HepG2 (cell line): ENCODE measurements at regions of chr6 and their contacts with region 1.

Region 1: GRCh38 chr6:43013843-43014433 is at the starts of genes KLHDC3 and MEA1:
- DNase-seq: peak; percentile 100
- ATAC-seq: peak; percentile 94
- H3K4me3 ChIP-seq: peak within 1 kb of the TSS; percentile 88 to 93 (median 91)
- H3K27ac ChIP-seq: peak within 1 kb of the TSS; percentile 44
- H3K4me1 ChIP-seq: peaks cover 38% of the 10 kb centered on the region
- H3K27me3 ChIP-seq: no peaks in the 10 kb centered on the region; a peak in 1 of 5 replicates
- CTCF ChIP-seq: no peak
- EP300 ChIP-seq: no peak; a peak in 1 of 4 replicates
- POLR2A ChIP-seq: peak in 1 of 2 experiments; percentile 68; a peak in 2 of 4 replicates
- RAD21 ChIP-seq: no peak
- total RNA-seq, gene KLHDC3: 91.5 and 92.5 TPM in 2 replicates
- total RNA-seq, gene MEA1: 86.2 and 110 TPM in 2 replicates

Region 2: DNA sequence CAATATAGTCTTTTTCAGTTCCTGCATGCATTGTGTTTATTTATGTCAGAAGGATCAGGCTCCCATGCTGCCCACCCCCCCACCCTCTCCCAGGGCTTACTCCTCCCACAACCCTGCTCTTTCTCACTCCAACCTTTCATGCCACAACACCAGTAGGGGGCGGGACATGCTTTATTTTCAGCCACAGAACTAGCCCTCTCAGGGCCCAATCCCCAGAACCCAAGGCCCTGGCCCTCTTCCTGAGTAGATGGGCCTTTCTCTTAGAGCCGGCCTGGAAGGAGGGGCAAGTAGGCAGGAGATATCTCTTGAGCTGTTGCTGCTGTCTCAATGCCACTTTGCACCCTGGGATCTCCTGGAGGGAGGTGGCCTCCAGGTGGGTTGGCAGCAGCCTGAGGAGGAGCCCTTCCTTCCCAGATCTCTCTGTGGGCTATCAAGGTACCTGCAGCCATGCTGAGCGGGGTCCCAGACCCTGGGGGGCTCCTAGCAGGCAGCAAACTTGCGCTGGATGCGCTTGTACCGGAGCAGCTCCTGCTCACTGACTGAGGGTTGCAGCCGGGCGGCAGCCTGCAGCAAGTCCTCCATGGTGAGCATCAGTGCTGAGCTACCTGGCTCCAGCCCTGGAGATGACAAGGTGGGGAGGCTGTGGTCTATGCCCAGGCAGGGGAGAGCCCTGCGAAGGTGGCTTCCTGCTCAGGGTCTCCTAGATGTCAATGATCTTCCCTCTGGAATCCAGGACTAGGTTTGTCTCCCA is 49.9 kb before region 1 on chr6:
- CTCF ChIA-PET with region 1: no interaction called
- POLR2A ChIA-PET with region 1: interaction called, 5 read pairs
- in situ Hi-C with region 1: no loop called
- intact Hi-C with region 1: loop called (anchors 5 kb)
- DNase-seq: peak; percentile 76
- ATAC-seq: peak; percentile 44
- H3K4me3 ChIP-seq: no peak overlapping the region
- H3K27ac ChIP-seq: no peak overlapping the region
- H3K4me1 ChIP-seq: peaks cover 35% of the 10 kb centered on the region
- H3K27me3 ChIP-seq: no peaks in the 10 kb centered on the region; a peak in 1 of 5 replicates
- CTCF ChIP-seq: peak; percentile 72
- EP300 ChIP-seq: no peak
- POLR2A ChIP-seq: no peak
- RAD21 ChIP-seq: peak; percentile 62

Region 3: GRCh38 chr6:43035495-43036194 is 21.7 kb after region 1 on chr6:
- CTCF ChIA-PET with region 1: no interaction called
- POLR2A ChIA-PET with region 1: interaction called, 31 read pairs
- in situ Hi-C with region 1: no loop called
- intact Hi-C with region 1: loop called (anchors 1 kb)
- DNase-seq: no peak
- ATAC-seq: peak; percentile 86
- H3K4me3 ChIP-seq: peak overlapping the region in 1 of 3 experiments; percentile 3; a peak in 1 of 6 replicates
- H3K27ac ChIP-seq: peak overlapping the region; percentile 39
- H3K4me1 ChIP-seq: peaks cover 12% of the 10 kb centered on the region
- H3K27me3 ChIP-seq: no peaks in the 10 kb centered on the region
- CTCF ChIP-seq: no peak
- EP300 ChIP-seq: no peak
- POLR2A ChIP-seq: peak in 1 of 2 experiments; percentile 16; a peak in 1 of 4 replicates
- RAD21 ChIP-seq: no peak

Region 4: DNA sequence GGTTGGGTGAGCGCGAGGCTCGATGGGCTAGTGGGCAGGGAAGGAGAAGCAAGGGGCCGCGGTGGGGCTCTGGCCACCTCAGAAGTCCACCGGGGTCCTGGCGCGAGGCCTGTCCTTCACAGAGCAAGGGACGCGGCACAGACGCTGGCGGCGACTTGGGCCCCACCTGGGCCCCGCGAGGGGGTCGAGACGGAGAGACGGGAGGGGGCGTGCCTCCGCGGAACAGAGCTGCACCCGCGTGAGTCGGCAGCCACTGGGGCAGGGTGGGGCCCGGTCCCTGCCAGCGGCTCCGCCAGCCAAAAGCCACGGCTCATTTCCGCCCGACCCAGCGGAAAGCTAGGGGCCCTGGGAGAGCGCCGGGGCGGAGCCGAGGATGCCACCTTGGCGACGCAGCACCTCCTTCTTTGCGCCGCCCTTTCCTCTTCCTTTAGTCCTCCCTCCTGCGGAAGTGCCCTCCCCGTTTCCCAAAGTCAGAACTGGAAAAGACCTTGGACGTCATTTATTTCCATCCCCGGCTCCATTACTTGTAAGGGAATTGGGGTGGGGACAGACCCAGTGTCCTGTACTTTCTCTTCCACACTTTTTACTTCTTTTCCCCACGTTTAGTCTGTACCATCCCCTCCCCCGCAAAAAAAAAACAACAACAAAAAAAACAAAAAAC is 39.7 kb after region 1 on chr6 and contains the start of gene CUL7:
- CTCF ChIA-PET with region 1: no interaction called
- POLR2A ChIA-PET with region 1: interaction called, 45 read pairs
- in situ Hi-C with region 1: no loop called
- intact Hi-C with region 1: loop called (anchors 5 kb)
- DNase-seq: peak; percentile 91
- ATAC-seq: peak; percentile 95
- H3K4me3 ChIP-seq: peak within 1 kb of the TSS; percentile 75 to 96 (median 94)
- H3K27ac ChIP-seq: peak within 1 kb of the TSS; percentile 84
- H3K4me1 ChIP-seq: peaks cover 49% of the 10 kb centered on the region
- H3K27me3 ChIP-seq: no peaks in the 10 kb centered on the region; a peak in 1 of 5 replicates
- CTCF ChIP-seq: no peak
- EP300 ChIP-seq: 0 out of 4 replicates have a peak, but pooled peaks of 1 of the 2 experiments have one; percentile 2
- POLR2A ChIP-seq: peak in 1 of 2 experiments; percentile 95; a peak in 2 of 4 replicates
- RAD21 ChIP-seq: peak; percentile 74
- total RNA-seq, gene CUL7: 30.7 and 32.0 TPM in 2 replicates

Region 5: GRCh38 chr6:43075670-43076463 is 61.9 kb after region 1 on chr6 and contains the start of gene PTK7:
- CTCF ChIA-PET with region 1: no interaction called
- POLR2A ChIA-PET with region 1: interaction called, 14 read pairs
- in situ Hi-C with region 1: no loop called
- intact Hi-C with region 1: no loop called
- DNase-seq: peak; percentile 74
- ATAC-seq: peak; percentile 73
- H3K4me3 ChIP-seq: peak within 1 kb of the TSS; percentile 99 to 100 (median 100)
- H3K27ac ChIP-seq: peak within 1 kb of the TSS; percentile 84
- H3K4me1 ChIP-seq: peaks cover 42% of the 10 kb centered on the region
- H3K27me3 ChIP-seq: no peaks in the 10 kb centered on the region; a peak in 1 of 5 replicates
- CTCF ChIP-seq: no peak
- EP300 ChIP-seq: no peak
- POLR2A ChIP-seq: peak in 1 of 2 experiments; percentile 74; a peak in 2 of 4 replicates
- RAD21 ChIP-seq: no peak
- total RNA-seq, gene PTK7: 48.5 and 99.8 TPM in 2 replicates

Region 6: DNA sequence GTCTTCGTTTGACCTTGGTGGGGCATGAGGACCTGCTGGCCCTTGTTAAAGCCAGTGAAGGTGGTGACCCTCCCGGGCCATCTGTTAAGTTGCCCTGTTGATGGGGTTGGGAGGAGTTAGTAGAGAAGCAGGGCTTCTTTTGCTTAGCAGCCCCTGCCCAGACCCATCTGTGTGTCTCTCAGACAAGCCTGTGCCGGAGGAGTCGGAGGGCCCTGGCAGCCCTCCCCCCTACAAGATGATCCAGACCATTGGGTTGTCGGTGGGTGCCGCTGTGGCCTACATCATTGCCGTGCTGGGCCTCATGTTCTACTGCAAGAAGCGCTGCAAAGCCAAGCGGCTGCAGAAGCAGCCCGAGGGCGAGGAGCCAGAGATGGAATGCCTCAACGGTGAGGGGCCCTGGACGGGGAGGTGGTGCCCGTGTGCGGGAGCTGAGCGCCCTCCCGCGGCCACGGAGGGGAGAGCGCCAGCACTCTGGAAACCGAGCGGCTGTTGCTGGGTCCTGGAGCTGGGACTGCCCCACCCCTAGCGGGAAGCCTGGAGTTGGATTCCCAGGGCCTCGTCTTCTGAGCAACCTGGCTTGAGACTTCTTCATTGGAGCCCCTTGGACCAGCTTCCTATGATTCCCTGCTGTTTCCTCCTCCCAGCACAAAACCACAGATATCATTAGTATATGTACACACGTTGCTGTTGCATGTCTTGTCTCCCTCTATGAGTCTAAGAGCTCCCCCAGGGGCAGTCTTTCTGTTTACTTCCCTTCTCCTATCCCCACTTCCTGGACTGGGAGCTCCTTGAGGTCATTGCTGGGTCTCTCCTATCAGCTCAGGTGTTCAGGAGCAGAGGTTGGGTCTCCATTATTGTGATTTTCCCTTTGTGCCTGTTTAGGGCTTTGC is 129.5 kb after region 1 on chr6:
- CTCF ChIA-PET with region 1: interaction called, 6 read pairs
- POLR2A ChIA-PET with region 1: interaction called, 6 read pairs
- in situ Hi-C with region 1: no loop called
- intact Hi-C with region 1: loop called (anchors 1 kb)
- DNase-seq: peak; percentile 76
- ATAC-seq: peak; percentile 95
- H3K4me3 ChIP-seq: no peak overlapping the region; a peak in 1 of 6 replicates
- H3K27ac ChIP-seq: no peak overlapping the region
- H3K4me1 ChIP-seq: peaks cover 21% of the 10 kb centered on the region
- H3K27me3 ChIP-seq: no peaks in the 10 kb centered on the region
- CTCF ChIP-seq: peak; percentile 100
- EP300 ChIP-seq: 0 out of 4 replicates have a peak, but pooled peaks of 1 of the 2 experiments have one; percentile 13
- POLR2A ChIP-seq: no peak
- RAD21 ChIP-seq: peak; percentile 100

Region 7: DNA sequence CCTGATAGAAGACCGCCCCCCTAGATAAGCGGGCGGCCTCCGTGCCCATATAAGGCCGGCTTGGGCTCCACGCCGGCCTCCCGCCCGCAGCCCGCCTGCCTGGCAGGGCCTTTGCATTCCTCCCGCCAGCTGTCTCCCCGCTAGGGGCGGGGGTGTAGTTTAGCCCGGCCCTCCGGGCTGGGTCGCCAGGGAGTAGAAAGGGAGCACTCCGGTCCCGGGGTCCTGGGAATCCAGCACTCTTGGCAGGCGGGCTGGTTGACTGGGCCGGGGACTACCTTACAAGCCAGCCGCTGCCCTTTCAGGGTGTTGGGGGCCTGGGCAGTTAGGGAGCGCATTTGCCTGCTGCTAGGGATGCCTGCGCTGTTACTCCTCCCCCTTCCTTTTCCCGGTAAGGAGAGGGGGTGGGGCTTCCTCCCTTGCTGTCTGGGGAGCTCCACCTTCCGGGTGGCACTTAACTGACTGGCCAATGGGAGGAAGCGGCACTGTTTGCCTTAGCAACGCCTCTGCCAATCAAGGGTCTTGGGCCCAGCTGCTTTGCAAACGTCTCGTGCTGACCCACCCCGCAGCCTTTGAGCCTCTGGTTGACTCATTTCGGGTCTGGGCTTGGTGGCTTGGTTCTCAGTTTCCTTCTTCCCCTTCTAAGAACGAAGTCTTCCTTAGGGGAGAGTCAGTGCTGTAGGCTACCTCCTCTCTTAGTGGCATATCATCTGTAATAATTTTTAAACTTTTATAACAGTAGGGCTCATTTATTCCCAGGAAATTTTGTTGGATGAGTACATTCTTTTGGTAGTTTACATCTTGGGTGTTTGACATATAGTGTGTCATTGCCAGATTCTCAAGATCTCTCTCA is 160.6 kb after region 1 on chr6:
- CTCF ChIA-PET with region 1: no interaction called
- POLR2A ChIA-PET with region 1: interaction called, 11 read pairs
- in situ Hi-C with region 1: no loop called
- intact Hi-C with region 1: no loop called
- DNase-seq: peak; percentile 99
- ATAC-seq: peak; percentile 76
- H3K4me3 ChIP-seq: peak overlapping the region; percentile 3 to 97 (median 95); a peak in 4 of 6 replicates
- H3K27ac ChIP-seq: peak overlapping the region; percentile 57
- H3K4me1 ChIP-seq: peaks cover 37% of the 10 kb centered on the region
- H3K27me3 ChIP-seq: no peaks in the 10 kb centered on the region; a peak in 1 of 5 replicates
- CTCF ChIP-seq: peak; percentile 39
- EP300 ChIP-seq: no peak
- POLR2A ChIP-seq: peak in 1 of 2 experiments; percentile 60; a peak in 1 of 4 replicates
- RAD21 ChIP-seq: peak; percentile 49; the same call in 1 of the 2 replicates

Region 8: DNA sequence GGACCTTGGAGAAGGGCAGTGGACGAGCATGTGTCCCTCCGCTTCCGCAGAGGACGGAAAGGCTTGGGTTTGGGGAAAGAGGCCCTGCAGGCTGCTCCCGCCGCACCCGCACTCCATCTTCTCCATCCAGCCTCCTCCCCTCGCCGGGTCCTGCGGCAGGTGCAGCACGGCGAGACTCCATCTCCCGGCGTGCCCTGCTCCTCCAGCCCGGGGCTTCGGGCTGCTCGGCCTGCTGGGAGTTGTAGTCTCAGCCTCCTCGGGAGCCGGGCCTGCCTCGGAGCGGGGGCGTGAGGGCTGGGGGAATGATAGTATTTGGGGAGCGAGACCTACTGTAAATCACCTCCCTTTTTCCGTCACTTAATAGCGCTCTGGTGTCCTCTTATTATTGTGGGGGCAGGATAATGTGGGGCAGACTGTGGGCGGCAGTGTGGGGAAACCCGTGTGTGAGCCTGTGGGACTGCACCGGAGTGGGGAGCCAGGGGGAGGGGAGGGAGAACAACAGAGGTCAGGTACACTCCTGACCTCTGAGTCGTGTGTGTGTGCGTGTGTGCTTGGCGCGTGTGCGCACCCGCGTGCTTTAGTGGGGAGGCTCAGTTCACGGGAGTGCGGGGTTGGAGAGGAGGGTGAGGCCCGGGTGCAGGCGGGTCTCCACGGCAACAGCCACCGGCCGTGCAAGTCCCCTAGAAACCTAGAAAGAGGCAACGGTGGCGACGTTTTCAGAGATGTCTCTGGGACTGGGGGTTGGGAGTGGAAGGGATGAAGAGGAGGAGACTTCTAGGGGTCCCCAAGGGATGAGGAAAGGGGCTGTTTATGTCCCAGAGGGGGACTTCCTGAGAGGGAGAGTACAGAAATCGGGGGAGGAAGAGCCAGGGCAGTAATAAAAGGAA is 233.4 kb after region 1 on chr6:
- CTCF ChIA-PET with region 1: no interaction called
- POLR2A ChIA-PET with region 1: no interaction called
- in situ Hi-C with region 1: no loop called
- intact Hi-C with region 1: no loop called
- DNase-seq: peak; percentile 58
- ATAC-seq: peak; percentile 96
- H3K4me3 ChIP-seq: peak overlapping the region; percentile 48 to 75 (median 58)
- H3K27ac ChIP-seq: no peak overlapping the region
- H3K4me1 ChIP-seq: peaks cover 38% of the 10 kb centered on the region
- H3K27me3 ChIP-seq: peaks cover 17 to 79% of the 10 kb centered on the region in 2 experiments
- CTCF ChIP-seq: peak; percentile 35
- EP300 ChIP-seq: 0 out of 4 replicates have a peak, but pooled peaks of 1 of the 2 experiments have one; percentile 13
- POLR2A ChIP-seq: no peak
- RAD21 ChIP-seq: no peak; the same call in 1 of the 2 replicates